ENCODE measurements at regions of chr14 and their contacts with region 1.

Region 1: GRCh38 chr14:74109369-74109768 is 24.6 kb downstream of the LIN52 start:
- DNase-seq: no peak
- H3K4me3 ChIP-seq: no peak overlapping the region
- H3K27ac ChIP-seq: no peak overlapping the region
- H3K4me1 ChIP-seq: no peaks in the 10 kb centered on the region
- H3K27me3 ChIP-seq: no peaks in the 10 kb centered on the region
- CTCF ChIP-seq: no peak
- POLR2A ChIP-seq: no peak

Region 2: DNA sequence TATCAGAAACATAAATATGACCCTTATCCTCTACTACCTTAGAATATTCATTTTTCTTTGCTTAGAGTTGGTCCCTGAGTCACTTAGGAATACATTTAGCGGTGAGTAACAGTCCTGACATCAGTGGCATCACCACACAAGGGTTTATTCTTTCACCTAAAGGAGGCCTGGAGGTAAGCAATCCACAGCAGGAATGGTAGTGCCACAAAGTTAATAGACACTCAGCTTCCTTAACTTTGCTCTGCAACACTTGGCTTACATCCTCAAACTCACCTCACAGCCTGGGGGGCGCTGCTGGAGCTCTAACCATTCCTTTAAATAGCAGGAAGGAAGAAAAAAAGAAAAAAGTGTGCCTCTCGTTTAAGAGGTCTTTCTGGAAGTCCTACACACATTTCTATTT is 61.1 kb before region 1 on chr14:
- intact Hi-C with region 1: no loop called
- DNase-seq: no peak
- H3K4me3 ChIP-seq: no peak overlapping the region
- H3K27ac ChIP-seq: no peak overlapping the region
- H3K4me1 ChIP-seq: peaks cover 0 to 6% of the 10 kb centered on the region in 2 donors
- H3K27me3 ChIP-seq: no peaks in the 10 kb centered on the region
- CTCF ChIP-seq: no peak
- POLR2A ChIP-seq: no peak

Region 3: DNA sequence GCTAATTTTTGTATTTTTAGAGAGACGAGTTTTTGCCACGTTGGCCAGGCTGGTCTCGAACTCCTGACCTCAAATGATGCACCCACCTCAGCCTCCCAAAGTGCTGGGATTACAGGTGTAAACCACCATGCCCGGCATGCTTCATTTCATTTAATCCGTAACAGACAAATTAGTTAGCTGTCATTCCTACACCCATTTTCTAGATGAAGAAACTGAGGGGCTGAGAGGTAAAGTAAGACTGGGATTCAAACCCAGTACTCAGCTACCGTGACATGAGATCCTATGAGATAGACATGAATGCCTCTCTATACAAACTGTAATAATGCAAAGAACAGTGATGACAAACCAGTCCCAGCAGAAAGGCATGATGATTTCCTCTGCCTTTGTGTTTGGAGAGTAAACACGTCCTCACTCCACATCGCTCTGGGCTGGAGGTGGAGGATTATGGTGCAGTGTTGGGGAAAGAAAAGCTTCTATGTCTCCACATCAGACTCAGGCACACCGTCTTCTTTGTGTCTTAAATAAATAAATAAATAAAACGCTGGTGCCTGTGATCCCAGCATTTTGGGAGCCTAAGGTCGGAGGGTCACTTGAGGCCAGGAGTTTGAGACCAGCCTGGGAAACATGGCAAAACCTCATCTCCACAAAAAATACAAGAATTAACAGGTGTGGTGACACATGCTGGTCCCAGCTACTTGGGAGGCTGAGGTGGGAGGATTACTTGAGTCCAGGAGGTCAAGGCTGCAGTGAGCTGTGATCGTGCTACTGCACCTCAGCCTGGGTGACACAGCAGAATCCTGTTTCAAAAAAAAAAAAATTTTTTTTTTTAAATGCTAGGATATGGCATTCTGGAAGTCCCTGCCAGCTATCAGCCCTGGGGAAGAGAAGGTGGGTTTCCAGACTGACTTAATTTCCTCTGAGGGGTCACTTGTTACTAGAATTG is 140.3 kb after region 1 on chr14:
- intact Hi-C with region 1: loop called (anchors 2 to 5 kb)
- DNase-seq: no peak
- H3K4me3 ChIP-seq: no peak overlapping the region
- H3K27ac ChIP-seq: no peak overlapping the region
- H3K4me1 ChIP-seq: no peaks in the 10 kb centered on the region
- H3K27me3 ChIP-seq: peaks cover 11% of the 10 kb centered on the region
- CTCF ChIP-seq: no peak
- POLR2A ChIP-seq: no peak

Region 4: GRCh38 chr14:74257078-74257989 is 148.0 kb after region 1 on chr14:
- intact Hi-C with region 1: loop called (anchors 2 to 5 kb)
- DNase-seq: peak; percentile 28 to 59 (median 41)
- H3K4me3 ChIP-seq: peak overlapping the region in 3 of 4 donors; percentile 25 to 79 (median 49)
- H3K27ac ChIP-seq: no peak overlapping the region
- H3K4me1 ChIP-seq: peaks cover 0 to 15% of the 10 kb centered on the region in 2 donors
- H3K27me3 ChIP-seq: no peaks in the 10 kb centered on the region
- CTCF ChIP-seq: peak in 5 of 6 experiments; percentile 41 to 98 (median 82)
- POLR2A ChIP-seq: no peak

Measured in adrenal gland (tissue), 19 donors.